Mammary epithelial cell (primary cell): ENCODE measurements at regions of chr12 and their contacts with region 1.

Region 1: GRCh38 chr12:42332301-42333285 is 6.6 kb downstream of the PPHLN1 start:
- DNase-seq: peak; percentile 26
- H3K4me3 ChIP-seq: no peak overlapping the region
- H3K27ac ChIP-seq: no peak overlapping the region
- H3K4me1 ChIP-seq: peaks cover 6% of the 10 kb centered on the region
- H3K27me3 ChIP-seq: no peaks in the 10 kb centered on the region
- CTCF ChIP-seq: peak; percentile 46 to 57

Region 2: DNA sequence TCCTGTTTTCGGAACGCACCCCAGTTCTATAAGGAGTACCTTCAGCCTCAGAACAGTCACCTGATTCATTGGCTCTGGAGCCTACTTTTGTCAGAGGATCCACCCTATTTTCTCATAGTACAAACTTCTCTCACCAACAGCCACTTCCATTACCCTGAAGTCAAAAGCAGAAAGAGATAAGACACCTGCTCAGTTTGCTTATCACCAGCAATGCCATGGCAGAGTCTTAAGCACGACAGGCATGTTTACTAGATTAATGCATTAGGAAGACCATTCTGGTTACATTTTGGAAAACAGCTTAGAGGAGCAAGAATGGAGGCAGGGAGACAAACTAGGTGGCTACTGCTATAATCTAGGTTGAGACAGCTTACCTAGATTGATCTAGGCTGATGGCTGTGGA is 255.6 kb before region 1 on chr12:
- CTCF ChIA-PET with region 1: no interaction called
- dilution Hi-C with region 1: no loop called
- in situ Hi-C with region 1: no loop called
- intact Hi-C with region 1: no loop called
- DNase-seq: no peak
- H3K4me3 ChIP-seq: no peak overlapping the region
- H3K27ac ChIP-seq: no peak overlapping the region
- H3K4me1 ChIP-seq: no peaks in the 10 kb centered on the region
- H3K27me3 ChIP-seq: no peaks in the 10 kb centered on the region
- CTCF ChIP-seq: no peak

Region 3: DNA sequence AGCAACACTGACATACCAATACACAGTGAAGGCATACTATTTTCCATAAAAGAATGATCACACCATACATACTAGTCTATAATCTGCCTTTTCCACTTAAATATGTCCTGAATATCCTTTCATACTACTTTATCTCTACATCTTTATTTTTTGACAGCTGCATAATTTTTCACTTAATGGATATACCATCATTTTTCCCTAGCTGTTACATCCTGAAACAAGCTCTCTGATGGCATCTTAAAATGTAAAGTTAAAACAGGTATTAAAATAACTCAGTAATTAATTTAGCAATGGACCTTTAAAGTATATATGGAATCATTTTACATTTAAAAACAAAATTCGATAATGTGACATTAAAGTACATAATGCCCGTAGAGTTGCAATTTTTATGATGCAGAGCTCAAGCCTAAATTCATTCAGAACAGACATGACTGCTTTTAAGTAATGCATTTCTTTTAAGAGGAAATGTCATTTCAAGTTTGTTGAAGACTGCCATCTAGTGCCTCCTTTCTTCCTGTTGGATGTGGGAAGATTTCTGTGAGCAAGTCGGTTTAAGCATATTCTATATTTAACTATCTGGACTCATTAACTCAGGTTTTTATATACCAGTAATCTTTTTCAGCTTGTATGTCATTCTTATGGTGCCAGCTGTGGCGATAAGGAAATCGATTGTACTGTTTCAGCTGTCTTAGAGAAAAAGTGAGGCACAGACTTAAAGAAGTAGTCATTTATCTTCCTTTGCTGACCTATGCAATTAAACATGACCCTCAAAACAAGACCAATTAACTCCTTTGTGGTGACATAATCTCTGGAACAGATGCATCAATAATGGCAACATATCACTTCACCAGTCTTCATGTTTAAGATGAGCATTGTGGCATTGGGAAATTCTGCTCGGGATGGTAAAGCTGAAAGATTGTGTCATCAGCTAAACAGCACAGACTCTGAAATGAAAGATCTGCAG is 236.6 kb after region 1 on chr12:
- CTCF ChIA-PET with region 1: no interaction called
- dilution Hi-C with region 1: no loop called
- in situ Hi-C with region 1: no loop called
- intact Hi-C with region 1: loop called (anchors 10 kb)
- DNase-seq: peak; percentile 48
- H3K4me3 ChIP-seq: no peak overlapping the region
- H3K27ac ChIP-seq: no peak overlapping the region
- H3K4me1 ChIP-seq: peaks cover 8% of the 10 kb centered on the region
- H3K27me3 ChIP-seq: no peaks in the 10 kb centered on the region
- CTCF ChIP-seq: peak; percentile 37 to 65